ENCODE measurements at regions of chr13 and their contacts with region 1.

Region 1: DNA sequence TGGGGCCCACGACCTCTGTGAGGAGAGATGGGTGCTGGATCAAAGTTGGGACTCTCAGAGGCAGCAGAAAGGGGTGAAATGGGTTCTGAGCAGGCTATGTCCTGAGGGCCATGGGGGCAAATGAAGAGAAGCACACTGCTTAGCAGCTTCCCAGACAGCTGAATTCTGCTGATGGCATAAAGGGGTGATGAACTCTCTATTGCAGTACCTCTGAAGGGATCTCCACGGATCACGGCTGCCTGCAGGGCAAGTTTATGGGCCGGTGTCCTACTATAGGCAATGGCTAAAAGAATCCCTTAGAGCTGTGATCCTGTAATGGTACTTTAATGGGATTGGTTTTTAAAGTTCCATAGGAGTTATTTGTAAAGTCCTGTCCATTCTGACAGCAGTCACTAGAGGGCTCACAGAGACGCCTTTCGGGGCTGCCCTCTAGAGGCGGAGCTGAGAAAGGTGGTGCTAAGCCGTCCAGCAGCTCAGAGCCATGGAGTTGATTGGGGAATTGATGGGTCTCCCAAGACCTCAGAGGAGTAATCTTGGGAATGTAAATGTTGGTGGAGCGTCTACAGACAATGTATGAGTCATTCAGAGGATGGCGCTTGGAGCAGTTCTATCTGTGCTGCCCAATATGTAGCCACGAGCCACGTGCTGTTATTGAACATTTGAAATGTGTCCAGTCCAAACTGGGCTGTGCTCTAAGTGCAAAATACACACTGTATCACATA is 287.3 kb downstream of the COG6 start:
- DNase-seq: peak; percentile 82
- H3K4me3 Mint-ChIP-seq: no peak overlapping the region
- H3K27ac Mint-ChIP-seq: no peak overlapping the region
- H3K4me1 Mint-ChIP-seq: peaks cover 7% of the 10 kb centered on the region
- H3K27me3 Mint-ChIP-seq: no peaks in the 10 kb centered on the region

Region 2: GRCh38 chr13:39655569-39656324 is 287.0 kb before region 1 on chr13 and contains the start of gene COG6:
- CTCF ChIA-PET with region 1: no interaction called
- intact Hi-C with region 1: no loop called
- DNase-seq: peak; percentile 93
- H3K4me3 Mint-ChIP-seq: peak within 1 kb of the TSS; percentile 92
- H3K27ac Mint-ChIP-seq: peak within 1 kb of the TSS; percentile 74
- H3K4me1 Mint-ChIP-seq: peaks cover 27% of the 10 kb centered on the region
- H3K27me3 Mint-ChIP-seq: peaks cover 2% of the 10 kb centered on the region
- total RNA-seq, gene COG6: 21.2 to 28.3 TPM

Region 3: GRCh38 chr13:39684531-39685137 is 258.1 kb before region 1 on chr13:
- CTCF ChIA-PET with region 1: interaction called, 13 read pairs
- intact Hi-C with region 1: loop called (anchors 2 kb)
- DNase-seq: no peak
- H3K4me3 Mint-ChIP-seq: no peak overlapping the region
- H3K27ac Mint-ChIP-seq: no peak overlapping the region
- H3K4me1 Mint-ChIP-seq: peaks cover 16% of the 10 kb centered on the region
- H3K27me3 Mint-ChIP-seq: no peaks in the 10 kb centered on the region

Region 4: GRCh38 chr13:39748961-39749360 is 193.8 kb before region 1 on chr13:
- CTCF ChIA-PET with region 1: no interaction called
- intact Hi-C with region 1: no loop called
- DNase-seq: no peak
- H3K4me3 Mint-ChIP-seq: no peak overlapping the region
- H3K27ac Mint-ChIP-seq: no peak overlapping the region
- H3K4me1 Mint-ChIP-seq: no peaks in the 10 kb centered on the region
- H3K27me3 Mint-ChIP-seq: no peaks in the 10 kb centered on the region

Region 5: DNA sequence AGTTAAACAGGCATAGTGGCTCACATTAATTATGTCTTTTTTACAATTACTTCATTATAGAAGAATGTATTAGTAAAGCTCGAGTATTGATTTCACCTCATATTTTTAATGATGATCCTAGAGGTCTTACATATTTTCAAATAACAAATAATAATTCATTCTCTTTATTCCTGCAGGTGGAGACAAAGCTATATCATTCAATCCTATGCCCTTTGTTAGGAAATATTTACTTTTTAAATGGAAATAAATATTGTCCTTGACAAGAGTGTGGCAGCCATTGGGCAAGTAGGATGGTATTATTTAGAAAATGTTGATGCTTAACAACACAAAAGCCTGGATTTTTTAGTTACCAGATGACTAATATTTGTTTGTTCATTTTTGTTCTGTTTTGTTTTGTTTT is 159.7 kb before region 1 on chr13:
- CTCF ChIA-PET with region 1: interaction called, 13 read pairs
- intact Hi-C with region 1: no loop called
- DNase-seq: no peak
- H3K4me3 Mint-ChIP-seq: no peak overlapping the region
- H3K27ac Mint-ChIP-seq: no peak overlapping the region
- H3K4me1 Mint-ChIP-seq: peaks cover 26% of the 10 kb centered on the region
- H3K27me3 Mint-ChIP-seq: no peaks in the 10 kb centered on the region

Region 6: GRCh38 chr13:39920613-39921012 is 22.1 kb before region 1 on chr13:
- CTCF ChIA-PET with region 1: interaction called, 11 read pairs
- intact Hi-C with region 1: no loop called
- DNase-seq: no peak
- H3K4me3 Mint-ChIP-seq: no peak overlapping the region
- H3K27ac Mint-ChIP-seq: no peak overlapping the region
- H3K4me1 Mint-ChIP-seq: no peaks in the 10 kb centered on the region
- H3K27me3 Mint-ChIP-seq: no peaks in the 10 kb centered on the region

Region 7: GRCh38 chr13:40017662-40018262 is 75.0 kb after region 1 on chr13:
- CTCF ChIA-PET with region 1: interaction called, 12 read pairs
- intact Hi-C with region 1: no loop called
- DNase-seq: no peak
- H3K4me3 Mint-ChIP-seq: no peak overlapping the region
- H3K27ac Mint-ChIP-seq: no peak overlapping the region
- H3K4me1 Mint-ChIP-seq: peaks cover 4% of the 10 kb centered on the region
- H3K27me3 Mint-ChIP-seq: no peaks in the 10 kb centered on the region

Measured in activated naive CD4-positive, alpha-beta T cell treated with anti-CD3 and anti-CD28 coated beads for 36 hours (primary cell).